Activated CD8-positive, alpha-beta T cell treated with anti-CD3 and anti-CD28 coated beads, Interleukin-2, amount 10 ng/mL, durations not matched to agents 7 days and 5 days (primary cell): ENCODE measurements at regions of chr17 and their contacts with region 1.

Region 1: GRCh38 chr17:28951991-28952975 is 965 bp upstream of the PHF12 start:
- DNase-seq: peak; percentile 98
- ATAC-seq: peak; percentile 76
- H3K4me3 Mint-ChIP-seq: no peak overlapping the region
- H3K27ac Mint-ChIP-seq: no peak overlapping the region
- H3K4me1 Mint-ChIP-seq: peaks cover 15% of the 10 kb centered on the region
- H3K27me3 Mint-ChIP-seq: no peaks in the 10 kb centered on the region

Region 2: DNA sequence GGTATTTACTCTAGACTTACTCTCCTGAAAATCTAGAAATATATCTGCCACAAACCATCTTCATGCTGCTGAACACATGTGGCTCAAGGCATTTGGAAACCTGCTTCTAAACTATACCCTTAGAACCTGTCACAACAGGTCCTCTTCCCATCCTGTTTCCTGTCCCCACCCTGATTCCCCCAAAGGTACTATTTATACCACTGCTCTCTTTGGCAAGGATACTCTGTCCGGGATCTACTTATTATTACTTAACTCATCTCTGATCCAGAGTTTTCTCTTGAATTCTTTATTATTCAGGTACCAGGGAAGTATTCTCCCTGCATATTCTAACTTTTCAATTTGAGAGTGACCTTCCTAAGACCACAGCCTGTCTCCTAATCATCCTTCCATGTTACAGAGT is 175.1 kb before region 1 on chr17:
- CTCF ChIA-PET with region 1: no interaction called
- POLR2A ChIA-PET with region 1: no interaction called
- DNase-seq: no peak
- ATAC-seq: no peak
- H3K4me3 Mint-ChIP-seq: no peak overlapping the region
- H3K27ac Mint-ChIP-seq: peak overlapping the region; percentile 34
- H3K4me1 Mint-ChIP-seq: peaks cover 28% of the 10 kb centered on the region
- H3K27me3 Mint-ChIP-seq: no peaks in the 10 kb centered on the region

Region 3: GRCh38 chr17:28871056-28871579 is 81.2 kb before region 1 on chr17:
- CTCF ChIA-PET with region 1: interaction called, 3 read pairs
- POLR2A ChIA-PET with region 1: interaction called, 10 read pairs
- DNase-seq: peak; percentile 76
- ATAC-seq: peak; percentile 99
- H3K4me3 Mint-ChIP-seq: no peak overlapping the region
- H3K27ac Mint-ChIP-seq: peak overlapping the region; percentile 97
- H3K4me1 Mint-ChIP-seq: peaks cover 16% of the 10 kb centered on the region
- H3K27me3 Mint-ChIP-seq: no peaks in the 10 kb centered on the region

Region 4: DNA sequence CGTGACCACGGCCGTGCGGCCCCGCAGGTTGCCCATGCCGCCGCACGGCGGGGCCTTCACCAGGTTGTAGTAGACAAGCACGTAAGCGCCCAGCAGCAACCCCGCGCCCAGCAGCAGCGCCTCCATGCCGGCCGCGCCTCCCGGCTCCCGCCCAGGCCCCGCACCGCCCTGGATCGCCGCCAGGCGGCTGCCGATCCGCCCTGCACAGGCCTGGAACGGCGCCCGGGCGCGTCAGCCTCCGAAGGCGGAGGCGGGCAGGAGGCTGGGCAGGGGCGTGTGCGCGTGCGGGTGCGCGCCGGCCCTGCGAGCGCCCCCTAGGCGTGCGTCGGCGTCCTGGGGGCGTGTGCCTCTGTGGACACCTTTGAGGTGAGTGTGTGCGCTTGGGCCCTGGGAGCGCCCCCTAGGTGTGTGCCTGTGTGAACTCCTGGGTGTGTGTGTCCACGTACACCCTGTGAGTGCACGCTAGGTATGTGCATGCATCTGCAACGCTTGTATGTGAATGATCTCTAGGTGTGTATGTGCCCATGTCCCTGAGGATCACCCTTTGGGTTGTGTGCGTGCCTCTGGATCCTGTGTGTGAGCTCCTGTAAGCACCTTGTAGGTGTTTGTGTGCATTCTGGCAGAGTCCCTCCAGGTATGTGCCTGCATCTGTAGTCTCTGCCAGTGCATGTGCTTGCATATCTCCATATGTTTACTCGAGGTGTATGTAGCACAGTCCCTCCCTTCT is 49.3 kb before region 1 on chr17 and contains the start of gene DHRS13:
- CTCF ChIA-PET with region 1: interaction called, 11 read pairs
- POLR2A ChIA-PET with region 1: interaction called, 23 read pairs
- DNase-seq: peak; percentile 94
- ATAC-seq: peak; percentile 95
- H3K4me3 Mint-ChIP-seq: peak within 1 kb of the TSS; percentile 88
- H3K27ac Mint-ChIP-seq: peak within 1 kb of the TSS; percentile 86
- H3K4me1 Mint-ChIP-seq: peaks cover 36% of the 10 kb centered on the region
- H3K27me3 Mint-ChIP-seq: no peaks in the 10 kb centered on the region
- total RNA-seq, gene DHRS13: 29.2 to 29.3 TPM

Region 5: GRCh38 chr17:28925912-28926365 is 26.3 kb before region 1 on chr17:
- CTCF ChIA-PET with region 1: interaction called, 47 read pairs
- POLR2A ChIA-PET with region 1: interaction called, 38 read pairs
- DNase-seq: peak; percentile 70
- ATAC-seq: peak; percentile 94
- H3K4me3 Mint-ChIP-seq: peak overlapping the region; percentile 26
- H3K27ac Mint-ChIP-seq: peak overlapping the region; percentile 88
- H3K4me1 Mint-ChIP-seq: peaks cover 55% of the 10 kb centered on the region
- H3K27me3 Mint-ChIP-seq: no peaks in the 10 kb centered on the region

Region 6: GRCh38 chr17:28967221-28968140 is 15.2 kb after region 1 on chr17:
- CTCF ChIA-PET with region 1: interaction called, 73 read pairs
- POLR2A ChIA-PET with region 1: interaction called, 3 read pairs
- DNase-seq: no peak
- ATAC-seq: no peak
- H3K4me3 Mint-ChIP-seq: no peak overlapping the region
- H3K27ac Mint-ChIP-seq: peak overlapping the region; percentile 51
- H3K4me1 Mint-ChIP-seq: peaks cover 4% of the 10 kb centered on the region
- H3K27me3 Mint-ChIP-seq: peaks cover 15% of the 10 kb centered on the region

Region 7: GRCh38 chr17:29111816-29112499 is 159.7 kb after region 1 on chr17:
- CTCF ChIA-PET with region 1: interaction called, 36 read pairs
- POLR2A ChIA-PET with region 1: interaction called, 4 read pairs
- DNase-seq: peak; percentile 71
- ATAC-seq: peak; percentile 72
- H3K4me3 Mint-ChIP-seq: no peak overlapping the region
- H3K27ac Mint-ChIP-seq: no peak overlapping the region
- H3K4me1 Mint-ChIP-seq: peaks cover 7% of the 10 kb centered on the region
- H3K27me3 Mint-ChIP-seq: no peaks in the 10 kb centered on the region

Region 8: DNA sequence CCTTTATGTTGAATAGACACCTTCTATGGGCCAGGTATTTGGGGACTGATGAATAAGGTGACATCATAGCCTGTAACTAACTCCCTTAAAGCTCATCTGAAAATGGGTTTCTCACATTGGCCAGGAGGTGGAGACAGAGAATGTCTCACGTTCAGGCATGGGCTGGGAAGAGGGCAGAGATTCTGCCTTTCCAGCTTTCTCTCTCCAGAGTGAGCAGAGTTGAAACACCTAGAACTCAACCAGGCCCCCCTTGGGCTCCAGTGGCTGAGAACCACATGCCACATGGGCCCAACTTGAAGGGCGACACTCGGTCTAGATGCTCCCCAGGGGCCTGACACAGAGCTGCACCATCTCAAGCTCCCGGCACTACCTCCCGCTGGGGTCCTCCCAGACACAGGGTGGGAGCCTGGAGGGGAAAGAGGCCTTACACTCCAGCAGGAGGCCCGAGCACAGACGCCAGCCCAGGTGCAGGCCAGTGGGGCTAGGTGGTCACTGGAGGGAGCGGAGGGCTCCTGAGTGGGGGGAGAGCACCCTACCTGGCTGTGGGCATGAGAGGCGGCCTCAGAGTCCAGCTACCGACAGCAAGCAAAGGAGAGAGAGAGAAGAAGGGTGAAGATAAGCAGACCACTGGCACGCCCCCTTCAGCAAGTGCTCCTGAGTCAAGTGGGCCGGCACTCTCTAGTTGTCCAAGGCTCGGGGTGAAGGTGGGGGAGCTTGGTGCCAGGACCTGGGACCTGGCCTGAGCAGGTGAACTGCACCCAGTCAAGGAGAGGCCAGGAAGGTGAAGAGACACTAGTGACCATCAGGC is 172.0 kb after region 1 on chr17:
- CTCF ChIA-PET with region 1: interaction called, 11 read pairs
- POLR2A ChIA-PET with region 1: interaction called, 4 read pairs
- DNase-seq: peak; percentile 69
- ATAC-seq: peak; percentile 88
- H3K4me3 Mint-ChIP-seq: no peak overlapping the region
- H3K27ac Mint-ChIP-seq: peak overlapping the region; percentile 30
- H3K4me1 Mint-ChIP-seq: peaks cover 4% of the 10 kb centered on the region
- H3K27me3 Mint-ChIP-seq: no peaks in the 10 kb centered on the region